ENCODE measurements at regions of chr20 and their contacts with region 1.

Region 1: GRCh38 chr20:33719989-33720709 is at the start of gene PXMP4:
- DNase-seq: peak; percentile 94
- H3K4me3 Mint-ChIP-seq: peak within 1 kb of the TSS; percentile 87
- H3K27ac Mint-ChIP-seq: peak within 1 kb of the TSS; percentile 85
- H3K4me1 Mint-ChIP-seq: peaks cover 29% of the 10 kb centered on the region
- H3K27me3 Mint-ChIP-seq: no peaks in the 10 kb centered on the region
- total RNA-seq, gene PXMP4: 19.1 to 21.8 TPM

Region 2: GRCh38 chr20:33653218-33653899 is 66.8 kb before region 1 on chr20:
- CTCF ChIA-PET with region 1: no interaction called
- POLR2A ChIA-PET with region 1: no interaction called
- DNase-seq: peak; percentile 38
- H3K4me3 Mint-ChIP-seq: no peak overlapping the region
- H3K27ac Mint-ChIP-seq: peak overlapping the region; percentile 50
- H3K4me1 Mint-ChIP-seq: peaks cover 18% of the 10 kb centered on the region
- H3K27me3 Mint-ChIP-seq: no peaks in the 10 kb centered on the region

Region 3: DNA sequence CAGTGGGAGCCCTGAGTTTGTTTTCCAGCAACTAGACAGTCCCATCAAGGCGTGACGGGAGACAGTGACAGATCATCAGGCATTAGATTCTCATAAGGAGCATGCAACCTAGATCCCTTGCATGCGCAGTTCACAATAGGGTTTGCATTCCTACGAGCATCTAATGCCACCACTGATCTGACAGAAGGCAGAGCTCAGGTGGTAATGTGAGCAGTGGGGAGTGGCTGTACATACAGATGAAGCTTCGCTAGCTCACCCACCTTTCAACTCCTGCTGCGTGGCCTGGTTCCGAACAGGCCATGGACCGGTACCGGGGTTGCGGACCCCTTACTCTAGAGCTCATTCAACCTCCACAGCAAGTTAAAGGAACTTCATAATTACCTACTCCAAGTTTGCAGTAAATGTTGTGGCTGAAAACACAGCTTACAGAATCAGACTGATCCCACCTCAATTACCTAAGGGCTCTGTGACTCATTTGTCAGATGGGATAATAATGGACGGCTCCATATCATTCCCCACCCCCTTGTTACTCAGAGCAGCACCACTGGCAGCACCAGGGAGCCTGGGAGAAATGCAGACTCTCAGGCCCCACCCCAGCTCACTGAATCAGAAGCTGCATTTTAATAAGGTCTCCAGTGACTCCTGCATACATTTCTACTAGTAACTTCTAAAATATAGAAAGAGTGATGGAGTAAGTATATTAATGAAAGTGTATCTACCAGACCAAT is 15.8 kb before region 1 on chr20:
- CTCF ChIA-PET with region 1: interaction called, 10 read pairs
- POLR2A ChIA-PET with region 1: no interaction called
- DNase-seq: no peak
- H3K4me3 Mint-ChIP-seq: no peak overlapping the region
- H3K27ac Mint-ChIP-seq: no peak overlapping the region
- H3K4me1 Mint-ChIP-seq: peaks cover 3% of the 10 kb centered on the region
- H3K27me3 Mint-ChIP-seq: no peaks in the 10 kb centered on the region

Region 4: GRCh38 chr20:33731693-33732165 is 11.6 kb after region 1 on chr20 and contains the start of gene ZNF341:
- CTCF ChIA-PET with region 1: interaction called, 12 read pairs
- POLR2A ChIA-PET with region 1: interaction called, 4 read pairs
- DNase-seq: peak; percentile 90
- H3K4me3 Mint-ChIP-seq: peak within 1 kb of the TSS; percentile 89
- H3K27ac Mint-ChIP-seq: peak within 1 kb of the TSS; percentile 96
- H3K4me1 Mint-ChIP-seq: peaks cover 30% of the 10 kb centered on the region
- H3K27me3 Mint-ChIP-seq: no peaks in the 10 kb centered on the region
- total RNA-seq, gene ZNF341: 5.5 to 5.8 TPM

Region 5: GRCh38 chr20:33810885-33811777 is 91.0 kb after region 1 on chr20 and contains the start of gene CHMP4B:
- CTCF ChIA-PET with region 1: no interaction called
- POLR2A ChIA-PET with region 1: no interaction called
- DNase-seq: peak; percentile 99
- H3K4me3 Mint-ChIP-seq: peak within 1 kb of the TSS; percentile 97
- H3K27ac Mint-ChIP-seq: peak within 1 kb of the TSS; percentile 95
- H3K4me1 Mint-ChIP-seq: peaks cover 43% of the 10 kb centered on the region
- H3K27me3 Mint-ChIP-seq: peaks cover 2% of the 10 kb centered on the region
- total RNA-seq, gene CHMP4B: 105 to 108 TPM

Measured in activated CD4-positive, alpha-beta T cell treated with anti-CD3 and anti-CD28 coated beads, Interleukin-2, amount 10 ng/mL, durations not matched to agents 7 days and 5 days (primary cell).